ENCODE measurements at regions of chr3 and their contacts with region 1.

Region 1: DNA sequence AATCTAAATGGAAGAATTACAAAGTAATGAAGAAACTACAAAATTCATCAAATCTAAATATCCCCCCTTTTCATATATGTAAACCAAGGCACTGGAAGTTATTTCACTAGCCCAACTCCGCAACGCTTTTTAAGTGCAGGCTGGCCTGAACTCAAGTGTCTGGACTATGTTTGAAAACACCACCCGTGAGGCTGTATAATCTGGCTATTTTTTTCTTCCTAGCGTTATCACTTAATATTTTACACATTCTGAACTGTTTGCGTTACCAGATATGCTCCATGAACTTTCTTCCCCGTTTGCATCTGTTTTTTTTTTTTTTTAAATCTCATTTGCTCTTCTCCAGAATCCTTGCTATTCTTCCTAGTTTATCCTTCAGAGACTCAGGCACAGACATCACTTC is 619.5 kb upstream of the CBLB start:
- DNase-seq: no peak
- H3K4me3 Mint-ChIP-seq: no peak overlapping the region
- H3K27ac Mint-ChIP-seq: no peak overlapping the region
- H3K4me1 Mint-ChIP-seq: no peaks in the 10 kb centered on the region
- H3K27me3 Mint-ChIP-seq: no peaks in the 10 kb centered on the region
- CTCF ChIP-seq: no peak

Region 2: DNA sequence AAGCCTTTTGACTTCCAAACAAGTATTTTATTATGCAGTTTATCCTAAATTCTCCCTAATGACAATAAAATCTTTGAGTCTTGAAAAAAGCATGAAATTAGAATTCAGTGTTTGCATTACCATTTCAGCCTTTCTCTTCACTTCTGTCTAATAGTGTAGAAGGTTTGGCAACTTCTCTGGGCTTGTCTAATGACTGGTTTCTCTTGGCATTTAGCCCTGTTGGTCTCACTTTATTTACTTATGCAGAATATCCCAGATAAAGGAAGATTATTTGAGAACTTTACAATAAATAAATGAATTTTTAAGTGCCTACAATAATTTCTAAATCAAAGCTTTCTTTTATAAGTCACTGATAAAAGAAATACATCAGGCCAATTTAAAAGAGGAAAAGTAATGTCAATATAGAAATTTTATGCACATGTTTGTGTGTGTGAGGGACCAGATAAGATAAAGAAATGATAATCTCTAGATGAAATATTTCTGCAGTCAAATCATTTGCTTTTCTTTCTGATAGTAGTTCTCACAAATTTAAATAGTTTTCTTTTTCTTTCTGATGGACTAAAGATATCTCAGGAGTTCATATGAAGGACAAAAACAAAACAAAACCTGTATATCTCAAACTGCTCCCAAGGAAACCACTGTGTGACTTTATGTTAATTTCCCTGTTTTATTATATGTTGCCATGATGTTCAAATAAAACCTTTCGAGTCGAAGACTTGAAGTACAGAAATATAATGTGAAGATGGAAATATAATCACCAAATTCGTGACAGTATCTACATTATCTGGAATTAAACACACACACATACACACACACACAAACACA is 86.5 kb before region 1 on chr3:
- CTCF ChIA-PET with region 1: no interaction called
- intact Hi-C with region 1: loop called (anchors 1 kb)
- DNase-seq: no peak
- H3K4me3 Mint-ChIP-seq: no peak overlapping the region
- H3K27ac Mint-ChIP-seq: no peak overlapping the region
- H3K4me1 Mint-ChIP-seq: no peaks in the 10 kb centered on the region
- H3K27me3 Mint-ChIP-seq: no peaks in the 10 kb centered on the region
- CTCF ChIP-seq: no peak